Testis (tissue), 5 donors: ENCODE measurements at regions of chr10 and their contacts with region 1.

Region 1: DNA sequence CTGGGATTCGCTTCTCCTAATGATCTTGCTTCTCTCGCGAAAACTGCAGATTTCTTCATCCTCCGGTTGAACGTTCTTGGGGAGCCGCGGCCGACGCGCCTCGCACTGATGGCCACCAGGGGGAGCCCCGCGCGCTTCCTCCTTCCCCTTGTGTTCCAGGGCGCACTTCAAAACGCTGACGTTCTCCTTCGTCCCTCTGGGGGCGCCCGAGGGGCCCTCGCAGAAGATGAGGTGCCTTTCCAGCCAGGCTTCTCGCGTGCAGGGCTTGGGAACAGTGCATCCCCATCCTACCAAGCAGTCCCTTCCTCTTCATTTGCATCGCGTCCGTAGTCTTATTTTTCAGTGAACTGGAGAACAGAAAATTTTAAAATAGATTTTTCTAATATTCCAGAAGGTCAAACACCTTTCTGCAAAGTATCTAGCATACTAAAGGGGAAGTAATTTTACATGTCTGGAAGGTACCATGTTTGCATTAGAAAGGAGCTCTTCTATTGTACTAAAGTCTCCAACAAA is 22.5 kb downstream of the GSTO2 start:
- DNase-seq: peak; percentile 94
- H3K4me3 ChIP-seq: no peak overlapping the region
- H3K27ac ChIP-seq: no peak overlapping the region
- H3K4me1 ChIP-seq: peaks cover 4% of the 10 kb centered on the region
- H3K27me3 ChIP-seq: no peaks in the 10 kb centered on the region
- CTCF ChIP-seq: peak; percentile 99 to 100 (median 99)
- POLR2A ChIP-seq: no peak

Region 2: GRCh38 chr10:104353325-104354048 is 62.0 kb after region 1 on chr10 and contains the start of gene CFAP58:
- intact Hi-C with region 1: loop called (anchors 5 kb)
- DNase-seq: peak; percentile 96
- H3K4me3 ChIP-seq: peak within 1 kb of the TSS; percentile 47 to 48
- H3K27ac ChIP-seq: no peak within 1 kb of the TSS
- H3K4me1 ChIP-seq: peaks cover 4% of the 10 kb centered on the region
- H3K27me3 ChIP-seq: no peaks in the 10 kb centered on the region
- CTCF ChIP-seq: peak; percentile 65 to 79 (median 71)
- POLR2A ChIP-seq: no peak
- total RNA-seq, gene CFAP58: 10.1 to 14.6 TPM